ENCODE measurements at regions of chr12 and their contacts with region 1.

Region 1: GRCh38 chr12:82627569-82628198 is 59.0 kb upstream of the TMTC2 start:
- DNase-seq: peak; percentile 21
- CTCF ChIP-seq: peak; percentile 28

Region 2: DNA sequence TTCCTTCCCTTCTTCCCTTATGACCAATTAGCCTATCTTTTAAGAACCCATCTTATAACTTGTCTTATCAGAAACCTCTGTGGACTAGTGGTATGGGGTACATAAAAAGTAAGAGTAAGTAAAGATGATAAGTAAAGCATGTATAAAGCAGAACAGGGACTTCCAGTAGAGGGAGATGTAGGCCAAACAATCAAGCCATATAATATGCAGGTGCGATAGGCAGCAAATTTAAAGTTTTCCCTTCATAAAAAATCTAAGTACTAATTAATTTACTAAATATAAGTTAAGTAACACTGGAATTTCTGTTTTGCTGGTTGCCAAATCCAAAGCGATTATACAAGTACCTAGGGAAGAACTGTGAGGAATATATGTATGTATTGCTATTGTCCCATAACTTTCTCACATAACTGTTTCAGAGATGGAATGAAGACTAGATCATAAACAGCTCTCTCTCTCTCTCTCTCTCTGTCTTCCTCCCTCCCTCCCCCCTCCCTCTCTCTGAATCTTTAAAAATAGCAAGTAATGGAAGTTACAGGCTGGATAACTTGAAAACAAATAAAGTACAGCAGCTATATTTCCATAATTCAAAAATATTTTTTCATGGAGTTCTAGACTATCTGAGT is 243.6 kb before region 1 on chr12:
- in situ Hi-C with region 1: loop called (anchors 25 kb)
- DNase-seq: no peak
- CTCF ChIP-seq: peak; percentile 58

Region 3: GRCh38 chr12:82527165-82527780 is 100.4 kb before region 1 on chr12:
- in situ Hi-C with region 1: loop called (anchors 10 kb)
- DNase-seq: peak; percentile 26
- CTCF ChIP-seq: peak; percentile 86

Measured in GM13976 (cell line).